BJ (cell line): ENCODE measurements at regions of chr16 and their contacts with region 1.

Region 1: GRCh38 chr16:81261049-81261648 is 22.7 kb downstream of the BCO1 start:
- DNase-seq: no peak
- H3K4me3 ChIP-seq: no peak overlapping the region
- H3K27me3 ChIP-seq: no peaks in the 10 kb centered on the region; the same call in 1 of the 2 replicates
- CTCF ChIP-seq: peak; percentile 72

Region 2: GRCh38 chr16:81117436-81117835 is 143.7 kb before region 1 on chr16:
- CTCF ChIA-PET with region 1: no interaction called
- POLR2A ChIA-PET with region 1: no interaction called
- DNase-seq: no peak
- H3K4me3 ChIP-seq: no peak overlapping the region
- H3K27me3 ChIP-seq: no peaks in the 10 kb centered on the region
- CTCF ChIP-seq: no peak

Region 3: GRCh38 chr16:81238296-81239011 is 22.7 kb before region 1 on chr16 and contains the start of gene BCO1:
- CTCF ChIA-PET with region 1: interaction called, 13 read pairs
- POLR2A ChIA-PET with region 1: no interaction called
- DNase-seq: no peak
- H3K4me3 ChIP-seq: peak within 1 kb of the TSS; percentile 8; the same call in 1 of the 2 replicates
- H3K27me3 ChIP-seq: no peaks in the 10 kb centered on the region
- CTCF ChIP-seq: no peak
- polyA plus RNA-seq, gene BCO1: not detected in 2 replicates

Region 4: DNA sequence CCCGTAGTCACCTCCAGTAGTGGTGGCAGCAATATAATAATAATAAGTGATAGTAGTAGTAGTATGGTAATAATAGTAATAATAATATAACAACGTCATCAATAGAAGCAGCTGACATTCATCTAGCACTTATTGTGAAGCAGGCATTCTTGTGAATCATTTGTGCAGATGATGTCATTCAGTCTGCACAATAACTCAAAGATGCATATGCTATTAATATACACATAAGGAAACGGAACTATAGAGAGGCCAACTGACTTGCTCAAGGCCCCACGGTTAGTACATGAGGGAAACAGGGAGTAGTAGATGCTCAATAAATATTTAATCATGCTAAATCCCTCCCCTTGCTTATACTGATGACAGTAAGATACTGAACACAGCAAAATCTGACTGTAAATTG is 18.2 kb after region 1 on chr16:
- CTCF ChIA-PET with region 1: interaction called, 13 read pairs
- POLR2A ChIA-PET with region 1: no interaction called
- DNase-seq: no peak
- H3K4me3 ChIP-seq: no peak overlapping the region
- H3K27me3 ChIP-seq: no peaks in the 10 kb centered on the region
- CTCF ChIP-seq: no peak